Right lobe of liver (tissue), 6 donors: ENCODE measurements at regions of chr12 and their contacts with region 1.

Region 1: DNA sequence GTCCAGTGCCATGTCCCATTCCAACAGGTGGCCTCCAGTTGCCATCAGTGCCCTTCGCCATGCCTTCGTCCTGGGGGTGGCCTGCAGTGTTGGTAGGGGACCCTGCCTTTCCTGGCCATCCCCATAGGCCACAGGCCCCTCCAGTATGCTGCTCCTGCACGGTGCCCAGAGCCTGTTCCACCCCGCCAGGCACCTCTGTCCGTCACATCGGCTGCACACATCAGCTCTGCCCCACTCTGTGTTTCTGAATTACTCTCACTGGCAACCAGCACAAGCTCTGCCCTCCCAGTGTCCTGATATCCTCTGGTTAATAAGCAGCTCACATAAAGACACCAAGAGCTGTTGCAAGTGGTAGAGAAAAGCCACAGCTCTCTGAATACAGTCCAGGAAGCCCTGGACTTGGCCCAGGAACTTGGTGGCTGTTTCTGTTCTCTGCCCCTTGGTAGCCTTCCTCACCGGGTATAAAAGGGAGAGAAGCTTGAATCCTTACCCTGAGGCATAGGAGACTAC is 31.3 kb upstream of the ATP2A2 start:
- DNase-seq: peak; percentile 56 to 90 (median 81)
- ATAC-seq: peak; percentile 52 to 67 (median 60)
- H3K4me3 ChIP-seq: no peak overlapping the region
- H3K27ac ChIP-seq: peak overlapping the region; percentile 49 to 93 (median 92)
- H3K4me1 ChIP-seq: peaks cover 0 to 64% (median 29%) of the 10 kb centered on the region in 4 donors
- H3K27me3 ChIP-seq: no peaks in the 10 kb centered on the region
- CTCF ChIP-seq: no peak
- POLR2A ChIP-seq: peak; percentile 84

Region 2: GRCh38 chr12:110042264-110042663 is 207.5 kb before region 1 on chr12:
- intact Hi-C with region 1: loop called in 1 of 2 experiments (anchors 5 kb)
- DNase-seq: peak in 2 of 3 donors; percentile 35 to 77
- ATAC-seq: peak; percentile 67 to 86 (median 82)
- H3K4me3 ChIP-seq: no peak overlapping the region
- H3K27ac ChIP-seq: peak overlapping the region; percentile 75 to 97 (median 92)
- H3K4me1 ChIP-seq: peaks cover 0 to 60% (median 20%) of the 10 kb centered on the region in 4 donors
- H3K27me3 ChIP-seq: no peaks in the 10 kb centered on the region
- CTCF ChIP-seq: no peak
- POLR2A ChIP-seq: no peak